CD8-positive, alpha-beta memory T cell (primary cell): ENCODE measurements at regions of chr3 and their contacts with region 1.

Region 1: GRCh38 chr3:149581681-149582370 is 76.0 kb downstream of the WWTR1 start:
- DNase-seq: no peak
- H3K4me3 ChIP-seq: no peak overlapping the region
- H3K4me3 Mint-ChIP-seq: peak overlapping the region in 3 of 7 donors; percentile 20 to 75 (median 31)
- H3K27ac ChIP-seq: no peak overlapping the region
- H3K27ac Mint-ChIP-seq: peak overlapping the region in 2 of 8 donors; percentile 14 to 54
- H3K4me1 ChIP-seq: no peaks in the 10 kb centered on the region
- H3K4me1 Mint-ChIP-seq: peaks cover 17 to 47% (median 39%) of the 10 kb centered on the region in 3 donors
- H3K27me3 ChIP-seq: no peaks in the 10 kb centered on the region
- H3K27me3 Mint-ChIP-seq: peaks cover 5 to 10% of the 10 kb centered on the region in 2 donors

Region 2: GRCh38 chr3:149571381-149571780 is 10.4 kb before region 1 on chr3:
- CTCF ChIA-PET with region 1: interaction called, 26 read pairs
- POLR2A ChIA-PET with region 1: no interaction called
- DNase-seq: no peak
- H3K4me3 ChIP-seq: no peak overlapping the region
- H3K4me3 Mint-ChIP-seq: no peak overlapping the region
- H3K27ac ChIP-seq: no peak overlapping the region
- H3K27ac Mint-ChIP-seq: no peak overlapping the region
- H3K4me1 ChIP-seq: no peaks in the 10 kb centered on the region
- H3K4me1 Mint-ChIP-seq: peaks cover 3 to 27% (median 14%) of the 10 kb centered on the region in 3 donors
- H3K27me3 ChIP-seq: no peaks in the 10 kb centered on the region
- H3K27me3 Mint-ChIP-seq: peaks cover 0 to 3% of the 10 kb centered on the region in 2 donors